Thyroid gland (tissue), 4 donors: ENCODE measurements at regions of chr19 and their contacts with region 1.

Region 1: GRCh38 chr19:34974646-34975045 is 10.6 kb upstream of the ZNF792 start:
- DNase-seq: no peak
- H3K4me3 ChIP-seq: no peak overlapping the region
- H3K27ac ChIP-seq: no peak overlapping the region
- H3K4me1 ChIP-seq: no peaks in the 10 kb centered on the region
- H3K27me3 ChIP-seq: no peaks in the 10 kb centered on the region
- CTCF ChIP-seq: no peak
- POLR2A ChIP-seq: no peak

Region 2: GRCh38 chr19:34475026-34475974 is 499.3 kb before region 1 on chr19:
- intact Hi-C with region 1: no loop called
- DNase-seq: no peak
- H3K4me3 ChIP-seq: no peak overlapping the region
- H3K27ac ChIP-seq: no peak overlapping the region
- H3K4me1 ChIP-seq: no peaks in the 10 kb centered on the region
- H3K27me3 ChIP-seq: no peaks in the 10 kb centered on the region
- CTCF ChIP-seq: no peak
- POLR2A ChIP-seq: no peak

Region 3: GRCh38 chr19:35013031-35013819 is 38.6 kb after region 1 on chr19:
- intact Hi-C with region 1: loop called (anchors 5 kb)
- DNase-seq: peak; percentile 55 to 63
- H3K4me3 ChIP-seq: no peak overlapping the region
- H3K27ac ChIP-seq: peak overlapping the region in 1 of 3 donors; percentile 26
- H3K4me1 ChIP-seq: peaks cover 0 to 16% of the 10 kb centered on the region in 2 donors
- H3K27me3 ChIP-seq: no peaks in the 10 kb centered on the region
- CTCF ChIP-seq: peak; percentile 83 to 97 (median 88)
- POLR2A ChIP-seq: no peak

Region 4: DNA sequence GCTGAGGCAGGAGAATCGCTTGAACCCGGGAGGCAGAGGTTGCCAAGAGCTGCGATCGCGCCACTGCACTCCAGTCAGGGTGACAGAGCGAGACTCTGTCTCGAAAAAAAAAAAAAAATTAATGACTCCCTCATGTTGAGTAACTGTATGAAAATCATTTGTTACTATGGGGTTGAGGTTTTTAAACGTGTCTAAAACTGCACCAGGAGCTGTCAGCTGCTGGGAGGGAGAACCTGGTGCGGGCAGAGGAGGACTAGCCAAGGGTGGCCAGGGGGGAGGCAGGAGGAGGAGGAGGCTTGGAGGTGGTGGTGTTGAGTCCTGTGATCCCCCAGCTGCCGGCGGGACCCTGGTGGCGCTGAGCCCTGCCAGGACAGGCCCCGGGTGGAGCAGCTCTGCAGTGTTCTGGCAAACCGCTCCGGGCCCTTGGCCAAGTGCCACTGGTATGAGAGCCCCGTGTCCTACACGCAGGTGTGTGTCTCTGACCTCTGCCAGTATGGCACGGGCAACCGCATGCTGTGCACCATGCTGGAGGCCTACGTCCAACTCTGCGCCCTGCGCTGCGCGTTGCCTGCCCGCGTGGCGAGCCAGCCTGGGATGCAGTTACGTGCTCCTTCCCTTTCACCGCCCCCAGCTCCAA is 123.9 kb after region 1 on chr19:
- intact Hi-C with region 1: no loop called
- DNase-seq: peak; percentile 20 to 43
- H3K4me3 ChIP-seq: no peak overlapping the region
- H3K27ac ChIP-seq: no peak overlapping the region
- H3K4me1 ChIP-seq: no peaks in the 10 kb centered on the region
- H3K27me3 ChIP-seq: no peaks in the 10 kb centered on the region
- CTCF ChIP-seq: no peak
- POLR2A ChIP-seq: no peak